ENCODE measurements at regions of chr1 and their contacts with region 1.

Region 1: DNA sequence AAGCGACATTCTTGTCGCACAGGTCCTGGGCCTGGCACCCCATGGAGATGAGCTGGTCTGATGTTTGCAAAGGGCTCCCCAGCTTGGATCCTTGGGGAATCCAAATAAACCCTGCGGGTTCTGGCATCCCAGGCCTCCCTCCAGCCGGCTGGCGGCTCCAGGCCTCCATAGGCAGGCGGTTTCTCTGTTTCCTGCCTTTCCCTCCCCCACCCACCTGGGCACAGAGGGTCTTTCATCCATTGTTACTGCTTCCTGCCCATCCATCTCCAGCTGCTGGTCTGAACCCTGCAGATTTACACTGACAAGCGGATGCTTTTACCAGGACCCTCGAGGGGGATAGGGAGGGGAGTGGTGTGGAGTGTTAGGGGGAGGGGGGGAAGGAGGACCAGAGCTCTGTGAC is 39.1 kb upstream of the ID3 start:
- DNase-seq: no peak
- ATAC-seq: no peak
- H3K4me3 Mint-ChIP-seq: no peak overlapping the region
- H3K27ac Mint-ChIP-seq: peak overlapping the region; percentile 73
- H3K4me1 Mint-ChIP-seq: peaks cover 87% of the 10 kb centered on the region
- H3K27me3 Mint-ChIP-seq: no peaks in the 10 kb centered on the region

Region 2: DNA sequence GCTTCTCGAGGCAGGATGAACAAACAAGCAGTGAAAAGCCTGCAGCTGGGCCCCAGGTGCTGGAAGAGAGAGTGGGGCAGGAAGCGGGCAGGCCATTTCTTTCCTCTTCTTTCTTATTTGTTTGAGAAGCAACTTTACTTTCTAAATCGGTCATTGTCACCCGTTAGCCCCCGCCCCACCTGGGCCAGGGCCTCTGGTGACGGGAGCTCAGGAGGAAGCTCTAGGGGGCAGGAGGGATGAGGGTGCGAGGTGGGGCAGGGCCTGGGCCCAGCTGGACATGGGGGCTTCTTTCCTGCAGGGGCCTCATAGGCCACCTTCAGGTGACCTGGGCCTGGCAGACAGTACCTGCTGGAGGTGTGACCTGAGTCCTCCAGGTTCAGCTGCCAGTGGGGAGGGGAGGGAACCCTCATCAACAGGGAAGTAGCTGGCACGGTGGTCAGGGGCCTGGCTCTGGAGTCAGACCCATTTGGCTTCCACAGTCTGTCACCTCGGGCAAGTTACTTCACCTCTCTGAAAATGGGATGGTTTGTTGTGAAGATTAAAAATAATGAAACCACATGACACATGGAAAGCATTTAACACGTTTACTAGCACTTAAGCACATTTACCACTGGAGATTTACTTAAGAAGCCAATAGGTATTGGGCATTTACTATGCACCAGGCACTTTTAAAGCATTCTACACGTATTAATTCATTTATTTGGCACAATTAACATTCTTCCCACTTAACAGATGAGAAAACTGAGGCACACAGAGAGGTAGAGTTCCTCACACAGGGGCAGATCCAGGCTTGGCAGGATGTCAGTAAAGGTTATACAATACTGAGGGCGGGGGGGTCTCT is 15.0 kb after region 1 on chr1:
- POLR2A ChIA-PET with region 1: interaction called, 87 read pairs
- DNase-seq: peak; percentile 68
- ATAC-seq: peak; percentile 72
- H3K4me3 Mint-ChIP-seq: peak overlapping the region; percentile 60
- H3K27ac Mint-ChIP-seq: peak overlapping the region; percentile 98
- H3K4me1 Mint-ChIP-seq: peaks cover 55% of the 10 kb centered on the region
- H3K27me3 Mint-ChIP-seq: no peaks in the 10 kb centered on the region

Region 3: GRCh38 chr1:23619299-23620188 is 21.1 kb after region 1 on chr1:
- POLR2A ChIA-PET with region 1: interaction called, 87 read pairs
- DNase-seq: peak; percentile 70
- ATAC-seq: peak; percentile 82
- H3K4me3 Mint-ChIP-seq: peak overlapping the region; percentile 81
- H3K27ac Mint-ChIP-seq: peak overlapping the region; percentile 61
- H3K4me1 Mint-ChIP-seq: peaks cover 55% of the 10 kb centered on the region
- H3K27me3 Mint-ChIP-seq: no peaks in the 10 kb centered on the region

Region 4: DNA sequence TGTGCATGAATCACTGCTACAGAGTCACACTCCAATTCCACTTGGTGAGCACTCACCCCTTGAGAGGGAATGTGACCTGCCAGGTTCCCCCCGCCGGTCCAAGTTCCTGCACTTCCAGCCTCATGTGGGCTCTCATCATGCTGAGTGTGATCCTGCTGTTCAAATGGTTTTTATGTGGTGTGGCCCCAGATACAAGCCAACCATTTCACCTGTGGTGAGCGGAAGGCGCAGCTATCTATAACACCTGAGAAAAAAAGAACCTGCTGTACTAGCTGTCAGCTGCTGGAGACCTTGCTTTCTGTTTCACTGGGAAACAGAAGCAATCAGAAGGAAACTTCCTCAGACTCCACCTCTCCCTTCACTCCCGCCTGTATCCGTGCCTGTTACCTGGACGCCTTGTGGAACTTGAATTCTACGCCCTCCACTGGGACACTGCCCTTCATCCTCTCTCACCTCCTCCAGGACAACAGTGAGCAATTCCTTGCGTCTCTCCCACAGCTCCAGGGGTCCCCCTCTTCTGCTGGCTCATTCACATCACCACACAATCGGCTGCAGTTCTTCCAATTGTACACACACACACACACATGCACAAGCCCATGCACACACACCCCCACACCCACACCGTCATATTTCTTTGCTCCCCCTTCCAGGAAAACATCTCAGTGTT is 28.8 kb after region 1 on chr1:
- POLR2A ChIA-PET with region 1: interaction called, 28 read pairs
- DNase-seq: no peak
- ATAC-seq: peak; percentile 48
- H3K4me3 Mint-ChIP-seq: peak overlapping the region; percentile 81
- H3K27ac Mint-ChIP-seq: peak overlapping the region; percentile 80
- H3K4me1 Mint-ChIP-seq: peaks cover 36% of the 10 kb centered on the region
- H3K27me3 Mint-ChIP-seq: no peaks in the 10 kb centered on the region

Region 5: DNA sequence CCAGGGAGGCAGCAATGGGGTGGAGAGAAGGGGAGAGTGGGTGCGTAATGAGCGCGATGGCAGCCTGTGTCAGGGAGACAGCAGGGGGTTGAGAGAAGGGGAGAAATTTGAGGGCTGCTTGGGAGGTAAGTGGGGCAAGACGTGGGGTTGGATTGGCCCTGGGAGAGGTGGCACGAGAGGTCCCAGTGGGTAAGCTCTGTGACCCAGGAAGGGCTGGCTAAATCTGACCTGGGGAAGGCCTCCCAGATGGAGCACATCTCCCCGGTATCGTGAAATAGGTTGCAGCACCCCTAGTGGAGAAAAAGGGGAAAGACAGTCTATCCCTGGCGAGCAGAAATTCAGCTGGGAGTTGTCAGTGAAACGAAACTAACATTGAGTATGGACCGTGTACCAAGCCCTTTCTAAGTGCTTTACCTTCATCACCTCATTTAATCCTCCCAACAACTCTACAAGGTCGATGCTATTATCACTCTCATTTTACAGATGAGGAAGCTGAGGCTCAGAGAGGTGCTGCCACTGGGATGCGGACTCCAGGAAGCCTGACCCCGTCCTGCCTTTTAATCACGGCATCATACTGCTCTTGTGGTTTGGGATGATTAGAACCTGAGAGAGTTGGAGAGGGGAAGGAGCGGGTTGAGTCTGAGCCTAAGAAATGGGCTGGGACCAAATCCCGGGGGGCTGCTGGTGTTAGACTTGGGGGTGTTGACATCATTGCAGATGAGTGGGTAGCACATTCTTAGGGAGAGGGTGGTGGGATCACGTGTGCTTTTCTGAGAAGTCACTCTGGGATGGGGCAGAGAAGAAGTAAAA is 36.6 kb after region 1 on chr1:
- POLR2A ChIA-PET with region 1: interaction called, 11 read pairs
- DNase-seq: peak; percentile 53
- ATAC-seq: peak; percentile 71
- H3K4me3 Mint-ChIP-seq: peak overlapping the region; percentile 67
- H3K27ac Mint-ChIP-seq: peak overlapping the region; percentile 84
- H3K4me1 Mint-ChIP-seq: peaks cover 20% of the 10 kb centered on the region
- H3K27me3 Mint-ChIP-seq: no peaks in the 10 kb centered on the region

Region 6: DNA sequence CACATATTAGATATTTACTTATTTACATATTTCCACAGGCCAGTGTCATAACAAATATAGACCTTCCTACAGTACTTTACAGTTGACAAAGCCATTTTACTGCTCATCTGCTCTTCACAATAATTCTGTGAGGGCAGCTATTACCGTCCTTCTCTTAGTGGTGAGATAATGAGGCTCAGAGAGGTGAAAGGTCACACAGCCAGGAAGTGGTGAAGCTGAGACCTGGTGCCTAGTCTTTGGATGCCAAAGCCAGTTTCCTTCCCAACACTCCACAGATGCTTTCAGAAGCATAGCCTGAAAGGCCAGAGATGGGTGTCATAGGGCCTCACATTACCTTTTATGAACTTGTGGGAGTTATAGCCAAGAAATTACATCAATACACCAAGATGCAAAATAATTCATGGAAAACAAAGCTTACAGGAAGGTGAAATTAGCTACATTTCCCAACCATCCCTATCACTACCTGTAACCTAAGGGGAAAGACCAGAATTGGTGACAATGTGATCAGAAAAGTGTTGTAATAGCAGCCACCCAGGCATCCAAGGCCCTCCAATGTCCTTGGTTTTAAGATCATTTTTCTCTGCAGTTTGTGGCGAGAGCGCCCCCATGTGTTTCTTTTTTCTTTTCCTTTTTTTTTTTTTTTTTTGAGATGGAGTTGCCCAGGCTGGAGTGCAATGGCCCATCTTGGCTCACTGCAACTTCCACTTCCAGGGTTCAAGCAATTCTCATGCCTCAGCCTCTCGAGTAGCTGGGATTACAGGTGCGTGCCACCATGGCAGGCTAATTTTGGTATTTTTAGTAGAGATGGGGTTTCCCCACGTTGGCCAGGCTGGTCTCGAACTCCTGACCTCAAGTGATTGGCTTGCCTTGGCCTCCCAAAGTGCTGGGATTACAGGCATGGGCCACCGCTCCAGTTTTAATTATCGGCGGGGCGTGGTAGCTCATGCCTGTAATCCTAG is 66.7 kb after region 1 on chr1:
- POLR2A ChIA-PET with region 1: no interaction called
- DNase-seq: no peak
- ATAC-seq: peak; percentile 65
- H3K4me3 Mint-ChIP-seq: peak overlapping the region; percentile 3
- H3K27ac Mint-ChIP-seq: peak overlapping the region; percentile 38
- H3K4me1 Mint-ChIP-seq: peaks cover 8% of the 10 kb centered on the region
- H3K27me3 Mint-ChIP-seq: peaks cover 3% of the 10 kb centered on the region

Region 7: GRCh38 chr1:23809751-23810171 is 211.3 kb after region 1 on chr1:
- POLR2A ChIA-PET with region 1: no interaction called
- DNase-seq: peak; percentile 84
- ATAC-seq: peak; percentile 88
- H3K4me3 Mint-ChIP-seq: no peak overlapping the region
- H3K27ac Mint-ChIP-seq: no peak overlapping the region
- H3K4me1 Mint-ChIP-seq: peaks cover 17% of the 10 kb centered on the region
- H3K27me3 Mint-ChIP-seq: no peaks in the 10 kb centered on the region